Activated CD8-positive, alpha-beta memory T cell treated with anti-CD3 and anti-CD28 coated beads, Interleukin-2, amount 10 ng/mL, durations not matched to agents 7 days and 5 days (primary cell): ENCODE measurements at regions of chr17 and their contacts with region 1.

Region 1: GRCh38 chr17:74457146-74457819 is 9.2 kb upstream of the CD300A start:
- DNase-seq: peak; percentile 79
- ATAC-seq: peak; percentile 32
- H3K4me3 Mint-ChIP-seq: no peak overlapping the region
- H3K27ac Mint-ChIP-seq: no peak overlapping the region
- H3K4me1 Mint-ChIP-seq: peaks cover 34% of the 10 kb centered on the region
- H3K27me3 Mint-ChIP-seq: peaks cover 12% of the 10 kb centered on the region

Region 2: DNA sequence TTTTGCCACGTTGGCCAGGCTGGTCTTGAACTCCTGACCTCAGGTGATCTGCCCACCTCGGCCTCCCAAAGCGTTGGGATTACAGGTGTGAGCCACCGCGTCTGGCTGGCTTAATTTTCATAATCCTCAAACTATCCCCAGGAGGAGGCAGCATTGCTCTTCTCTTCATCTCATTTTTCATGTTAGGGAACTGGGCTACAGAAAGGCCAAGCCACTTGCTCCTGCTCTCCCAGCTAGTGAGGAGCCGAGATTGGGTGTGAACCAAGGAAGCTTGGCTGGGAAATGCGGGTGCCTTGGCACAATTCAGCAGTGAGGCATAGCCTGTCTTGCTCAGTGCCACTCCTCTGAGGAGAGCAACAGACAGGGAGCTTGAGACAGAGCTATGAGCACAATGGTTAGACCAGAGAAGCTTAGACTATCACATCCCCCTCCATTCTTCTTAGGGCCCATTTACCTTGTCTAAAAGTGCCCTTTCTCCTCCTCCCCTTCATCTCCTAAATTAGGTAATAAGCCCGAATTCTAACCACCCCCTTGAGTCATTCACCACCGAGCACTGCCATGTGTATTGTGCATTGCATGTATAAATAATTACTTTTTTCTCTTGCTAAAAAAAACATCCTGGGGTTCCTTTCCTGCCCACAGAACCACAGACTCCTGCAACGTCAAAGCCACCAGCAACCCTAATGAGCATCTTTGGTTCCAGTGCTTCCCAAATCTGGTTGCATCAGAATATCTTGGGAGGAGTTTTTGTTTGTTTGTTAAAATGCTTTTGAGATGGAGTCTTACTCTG is 151.2 kb before region 1 on chr17:
- CTCF ChIA-PET with region 1: interaction called, 14 read pairs
- DNase-seq: no peak
- ATAC-seq: peak; percentile 46
- H3K4me3 Mint-ChIP-seq: no peak overlapping the region
- H3K27ac Mint-ChIP-seq: no peak overlapping the region
- H3K4me1 Mint-ChIP-seq: peaks cover 18% of the 10 kb centered on the region
- H3K27me3 Mint-ChIP-seq: peaks cover 4% of the 10 kb centered on the region

Region 3: GRCh38 chr17:74437702-74438101 is 19.6 kb before region 1 on chr17:
- CTCF ChIA-PET with region 1: interaction called, 36 read pairs
- DNase-seq: no peak
- ATAC-seq: no peak
- H3K4me3 Mint-ChIP-seq: no peak overlapping the region
- H3K27ac Mint-ChIP-seq: no peak overlapping the region
- H3K4me1 Mint-ChIP-seq: peaks cover 2% of the 10 kb centered on the region
- H3K27me3 Mint-ChIP-seq: peaks cover 40% of the 10 kb centered on the region

Region 4: GRCh38 chr17:74442670-74443515 is 14.4 kb before region 1 on chr17:
- CTCF ChIA-PET with region 1: interaction called, 36 read pairs
- DNase-seq: no peak
- ATAC-seq: no peak
- H3K4me3 Mint-ChIP-seq: no peak overlapping the region
- H3K27ac Mint-ChIP-seq: no peak overlapping the region
- H3K4me1 Mint-ChIP-seq: peaks cover 4% of the 10 kb centered on the region
- H3K27me3 Mint-ChIP-seq: peaks cover 12% of the 10 kb centered on the region

Region 5: DNA sequence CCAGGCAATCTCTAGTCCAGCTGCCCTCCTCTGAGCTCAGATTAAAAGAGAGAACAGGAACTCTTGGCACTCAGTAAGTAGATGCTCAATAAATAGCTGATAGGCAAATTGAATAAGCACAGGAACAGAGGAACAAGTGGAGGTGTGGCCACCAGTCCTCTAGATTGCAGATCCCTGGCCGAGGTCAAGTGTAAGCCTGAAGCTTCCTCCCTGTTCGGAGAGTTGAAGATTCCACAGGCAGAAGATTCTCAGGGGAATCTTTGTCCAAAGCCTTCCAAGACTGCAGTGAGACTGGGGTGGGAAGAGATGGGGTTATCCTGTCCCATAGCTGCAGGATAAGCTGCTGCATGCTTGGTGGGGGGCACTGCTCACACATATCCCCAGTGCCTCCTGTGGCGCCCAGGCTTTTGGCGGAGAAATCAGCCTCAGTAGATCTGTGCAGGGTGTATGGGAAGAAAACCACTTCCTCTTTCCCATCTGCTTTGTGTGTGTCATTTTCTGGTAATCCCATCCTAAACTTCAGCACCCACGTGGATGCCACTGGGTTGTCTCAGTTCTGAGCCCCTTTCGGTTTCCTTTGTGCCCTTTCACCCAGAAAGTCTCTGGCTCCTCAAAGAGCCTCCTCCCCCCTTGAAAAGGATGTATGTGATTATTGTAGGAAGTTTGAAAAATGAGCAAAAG is 21.3 kb after region 1 on chr17:
- CTCF ChIA-PET with region 1: interaction called, 10 read pairs
- DNase-seq: peak; percentile 71
- ATAC-seq: peak; percentile 70
- H3K4me3 Mint-ChIP-seq: peak overlapping the region; percentile 5
- H3K27ac Mint-ChIP-seq: peak overlapping the region; percentile 48
- H3K4me1 Mint-ChIP-seq: peaks cover 43% of the 10 kb centered on the region
- H3K27me3 Mint-ChIP-seq: no peaks in the 10 kb centered on the region

Region 6: GRCh38 chr17:74493381-74493833 is 36.1 kb after region 1 on chr17:
- CTCF ChIA-PET with region 1: interaction called, 22 read pairs
- DNase-seq: peak; percentile 76
- ATAC-seq: peak; percentile 78
- H3K4me3 Mint-ChIP-seq: no peak overlapping the region
- H3K27ac Mint-ChIP-seq: no peak overlapping the region
- H3K4me1 Mint-ChIP-seq: peaks cover 22% of the 10 kb centered on the region
- H3K27me3 Mint-ChIP-seq: peaks cover 6% of the 10 kb centered on the region

Region 7: DNA sequence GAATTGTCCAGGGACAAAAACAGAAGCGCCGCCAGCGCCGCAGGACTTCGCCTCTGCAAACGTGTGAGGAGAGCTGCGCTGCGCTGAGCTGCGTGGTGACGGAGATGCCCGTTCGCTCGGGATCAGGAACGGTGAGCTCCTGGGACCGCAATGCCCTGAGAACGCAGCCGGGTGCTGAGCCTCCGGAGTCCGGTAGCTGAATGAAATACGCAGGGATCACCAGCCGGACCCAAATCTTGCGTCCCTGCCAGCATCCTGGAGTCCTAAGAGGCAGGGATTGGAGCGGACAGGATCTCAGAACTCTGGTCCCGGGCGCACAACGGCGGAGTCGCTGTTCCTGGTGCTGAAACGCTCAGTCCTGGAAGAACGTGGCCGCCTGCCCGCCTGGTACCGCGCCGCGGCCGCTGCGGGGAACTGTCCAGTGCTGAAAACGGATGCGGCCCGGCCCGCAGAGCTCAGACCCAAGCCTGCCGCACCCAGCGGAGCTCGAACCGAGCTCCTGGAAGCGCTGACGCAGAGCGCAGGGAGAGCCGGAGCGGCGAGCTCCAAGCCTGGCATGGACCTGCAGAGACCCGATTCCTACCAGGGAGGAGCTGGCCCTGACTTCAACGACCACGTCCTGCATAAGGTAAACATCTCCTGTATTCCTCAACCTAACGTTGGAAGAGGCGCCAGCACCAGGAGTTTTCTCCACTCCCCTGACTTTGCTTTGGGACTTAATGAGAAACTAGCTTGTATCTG is 213.9 kb after region 1 on chr17:
- CTCF ChIA-PET with region 1: no interaction called
- DNase-seq: peak; percentile 82
- ATAC-seq: peak; percentile 89
- H3K4me3 Mint-ChIP-seq: no peak overlapping the region
- H3K27ac Mint-ChIP-seq: no peak overlapping the region
- H3K4me1 Mint-ChIP-seq: no peaks in the 10 kb centered on the region
- H3K27me3 Mint-ChIP-seq: peaks cover 76% of the 10 kb centered on the region